Heart left ventricle (tissue), 16 donors: ENCODE measurements at regions of chr6 and their contacts with region 1.

Region 1: GRCh38 chr6:163438940-163439335 is 24.4 kb downstream of the QKI start:
- DNase-seq: peak; percentile 32 to 70 (median 59)
- ATAC-seq: peak in 3 of 4 donors; percentile 43 to 64 (median 57)
- H3K4me3 ChIP-seq: no peak overlapping the region
- H3K27ac ChIP-seq: no peak overlapping the region
- H3K4me1 ChIP-seq: peaks cover 8 to 100% (median 86%) of the 10 kb centered on the region in 12 donors
- H3K27me3 ChIP-seq: no peaks in the 10 kb centered on the region
- CTCF ChIP-seq: no peak
- POLR2A ChIP-seq: no peak

Region 2: GRCh38 chr6:163533443-163533842 is 94.5 kb after region 1 on chr6:
- intact Hi-C with region 1: no loop called
- DNase-seq: no peak
- ATAC-seq: peak; percentile 48 to 69 (median 64)
- H3K4me3 ChIP-seq: no peak overlapping the region
- H3K27ac ChIP-seq: peak overlapping the region in 9 of 12 donors; percentile 0 to 63 (median 32)
- H3K4me1 ChIP-seq: peaks cover 13 to 93% (median 82%) of the 10 kb centered on the region in 12 donors
- H3K27me3 ChIP-seq: no peaks in the 10 kb centered on the region
- CTCF ChIP-seq: no peak
- POLR2A ChIP-seq: no peak

Region 3: GRCh38 chr6:163554663-163555062 is 115.7 kb after region 1 on chr6:
- intact Hi-C with region 1: loop called in 1 of 10 experiments (anchors 10 kb)
- DNase-seq: peak in 3 of 5 donors; percentile 23 to 65 (median 53)
- ATAC-seq: peak in 3 of 4 donors; percentile 46 to 56 (median 48)
- H3K4me3 ChIP-seq: no peak overlapping the region
- H3K27ac ChIP-seq: peak overlapping the region in 2 of 12 donors; percentile 2 to 22
- H3K4me1 ChIP-seq: peaks cover 0 to 57% (median 28%) of the 10 kb centered on the region in 12 donors
- H3K27me3 ChIP-seq: no peaks in the 10 kb centered on the region
- CTCF ChIP-seq: peak; percentile 20 to 59 (median 44)
- POLR2A ChIP-seq: no peak